Gastrocnemius medialis (tissue), 4 donors: ENCODE measurements at regions of chr9 and their contacts with region 1.

Region 1: DNA sequence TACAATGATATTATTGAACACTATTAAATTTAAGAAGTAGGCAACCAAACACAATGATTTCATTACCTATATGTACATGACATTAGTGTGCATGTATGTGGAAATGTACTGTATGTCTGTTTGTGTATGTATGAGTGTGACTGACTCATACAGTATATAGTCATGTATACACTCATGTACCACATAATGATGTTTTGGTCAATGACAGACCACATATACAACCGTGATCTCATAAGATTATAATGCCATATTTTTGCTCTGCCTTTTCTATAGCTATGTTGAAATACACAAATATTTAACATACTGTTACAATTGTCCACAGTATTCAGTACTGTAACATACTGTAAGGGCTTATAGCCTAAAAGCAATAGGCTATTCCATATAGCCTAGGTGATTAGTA is 19.7 kb downstream of the SVEP1 start:
- DNase-seq: no peak
- ATAC-seq: no peak
- H3K4me3 ChIP-seq: no peak overlapping the region
- H3K27ac ChIP-seq: no peak overlapping the region
- H3K4me1 ChIP-seq: no peaks in the 10 kb centered on the region
- H3K27me3 ChIP-seq: no peaks in the 10 kb centered on the region
- CTCF ChIP-seq: no peak
- POLR2A ChIP-seq: no peak

Region 2: DNA sequence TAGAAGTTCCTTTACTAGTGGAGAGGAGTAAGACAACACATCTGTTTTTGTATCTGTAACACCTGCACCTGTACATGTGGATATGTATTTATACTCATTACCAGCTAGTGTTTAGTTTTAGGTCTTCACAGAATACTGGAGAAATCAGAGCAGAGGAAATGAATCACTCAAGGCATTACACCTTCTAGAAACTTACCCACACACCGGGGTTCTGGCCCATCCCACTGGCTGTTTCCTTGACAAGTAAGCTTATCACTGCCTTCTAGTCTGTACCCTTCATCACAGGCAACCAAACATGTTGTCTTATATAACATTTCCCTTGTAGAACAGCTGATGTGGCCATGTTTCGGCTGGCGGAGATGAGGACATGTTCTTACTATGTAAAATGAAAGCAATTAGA is 57.0 kb before region 1 on chr9:
- in situ Hi-C with region 1: loop called in 1 of 4 experiments (anchors 10 kb)
- intact Hi-C with region 1: no loop called
- DNase-seq: no peak
- ATAC-seq: no peak
- H3K4me3 ChIP-seq: no peak overlapping the region
- H3K27ac ChIP-seq: no peak overlapping the region
- H3K4me1 ChIP-seq: no peaks in the 10 kb centered on the region
- H3K27me3 ChIP-seq: no peaks in the 10 kb centered on the region
- CTCF ChIP-seq: no peak
- POLR2A ChIP-seq: no peak

Region 3: GRCh38 chr9:110526426-110526825 is 33.4 kb before region 1 on chr9:
- in situ Hi-C with region 1: no loop called
- intact Hi-C with region 1: no loop called
- DNase-seq: no peak
- ATAC-seq: no peak
- H3K4me3 ChIP-seq: no peak overlapping the region
- H3K27ac ChIP-seq: no peak overlapping the region
- H3K4me1 ChIP-seq: no peaks in the 10 kb centered on the region
- H3K27me3 ChIP-seq: no peaks in the 10 kb centered on the region
- CTCF ChIP-seq: no peak
- POLR2A ChIP-seq: no peak